MCF 10A (cell line): ENCODE measurements at regions of chr9 and their contacts with region 1.

Region 1: GRCh38 chr9:21709464-21710058 is 92.9 kb upstream of the MTAP start:
- DNase-seq: peak; percentile 59
- H3K4me3 Mint-ChIP-seq: no peak overlapping the region
- H3K27ac Mint-ChIP-seq: peak overlapping the region; percentile 35
- H3K4me1 Mint-ChIP-seq: peaks cover 6% of the 10 kb centered on the region
- H3K27me3 Mint-ChIP-seq: no peaks in the 10 kb centered on the region
- CTCF ChIP-seq: peak; percentile 29

Region 2: DNA sequence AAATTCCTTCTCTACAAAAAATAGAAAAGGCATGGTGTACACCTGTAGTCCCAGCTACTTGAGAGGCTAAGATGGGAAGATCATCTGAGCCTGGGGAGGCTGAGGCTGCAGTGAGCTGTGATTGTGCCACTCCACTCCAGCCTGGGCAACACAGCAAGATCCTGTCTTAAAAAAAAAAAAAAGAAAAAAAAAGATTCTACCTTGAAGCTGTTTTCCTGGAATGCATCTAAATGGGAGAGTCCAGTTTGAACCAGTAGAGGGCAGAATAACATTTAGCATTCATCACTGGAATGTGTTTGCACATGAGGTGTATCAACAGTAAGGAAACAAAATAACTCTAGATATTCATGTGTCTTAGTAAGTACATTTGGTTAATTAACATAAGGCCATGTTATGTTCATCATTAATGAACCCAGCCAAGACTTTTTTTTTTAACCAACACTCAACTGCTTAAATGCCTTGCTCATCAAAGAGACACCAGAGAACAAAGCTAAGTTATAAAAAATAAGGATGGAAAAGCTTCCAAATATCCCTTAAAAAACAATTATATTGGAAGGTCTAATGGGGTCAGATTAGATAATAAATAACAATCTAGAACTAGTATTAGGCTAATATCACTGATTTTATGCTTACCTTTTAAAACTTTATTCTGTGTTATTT is 243.6 kb before region 1 on chr9:
- CTCF ChIA-PET with region 1: interaction called, 26 read pairs
- POLR2A ChIA-PET with region 1: no interaction called
- intact Hi-C with region 1: loop called (anchors 10 kb)
- DNase-seq: peak; percentile 47
- H3K4me3 Mint-ChIP-seq: no peak overlapping the region
- H3K27ac Mint-ChIP-seq: no peak overlapping the region
- H3K4me1 Mint-ChIP-seq: no peaks in the 10 kb centered on the region
- H3K27me3 Mint-ChIP-seq: no peaks in the 10 kb centered on the region
- CTCF ChIP-seq: peak; percentile 38

Region 3: GRCh38 chr9:21473236-21473635 is 236.3 kb before region 1 on chr9:
- CTCF ChIA-PET with region 1: interaction called, 26 read pairs
- POLR2A ChIA-PET with region 1: no interaction called
- intact Hi-C with region 1: loop called (anchors 10 kb)
- DNase-seq: no peak
- H3K4me3 Mint-ChIP-seq: no peak overlapping the region
- H3K27ac Mint-ChIP-seq: no peak overlapping the region
- H3K4me1 Mint-ChIP-seq: no peaks in the 10 kb centered on the region
- H3K27me3 Mint-ChIP-seq: no peaks in the 10 kb centered on the region
- CTCF ChIP-seq: no peak

Region 4: DNA sequence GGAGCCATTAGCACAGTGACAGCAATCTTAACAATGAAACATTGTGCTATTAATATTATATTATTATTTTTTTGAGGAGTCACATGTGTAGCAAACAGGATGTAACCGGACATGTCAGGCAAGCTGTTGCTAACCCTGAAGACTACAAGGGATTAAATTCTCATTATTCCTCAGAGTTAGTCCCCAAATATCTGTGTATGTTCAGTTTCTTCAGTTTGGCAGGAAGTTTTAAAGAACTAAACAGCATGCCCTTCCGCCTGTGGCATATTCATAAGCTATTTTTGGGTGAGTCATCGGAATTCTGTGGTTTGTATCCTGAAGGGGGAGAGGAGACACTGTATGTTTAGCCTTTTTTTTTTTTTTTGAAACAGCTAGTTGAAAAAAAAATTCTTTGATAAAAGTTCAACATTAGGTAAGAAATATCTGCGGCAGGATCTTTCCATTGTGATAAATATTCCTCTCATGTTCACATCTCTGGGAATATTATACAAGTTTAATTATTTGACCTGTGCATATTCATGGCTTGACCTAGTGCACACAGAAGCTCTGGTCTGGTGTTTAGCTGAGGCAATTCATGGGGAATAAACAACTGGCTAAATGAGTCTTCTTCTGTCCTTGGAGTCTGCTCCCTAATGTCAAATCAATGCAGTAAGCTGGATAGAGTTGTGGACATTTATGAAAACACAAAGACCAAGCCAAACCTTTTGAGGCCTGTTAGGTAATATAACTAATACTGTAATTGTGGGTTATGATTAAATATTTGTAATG is 502.2 kb after region 1 on chr9:
- CTCF ChIA-PET with region 1: interaction called, 4 read pairs
- POLR2A ChIA-PET with region 1: no interaction called
- intact Hi-C with region 1: loop called (anchors 2 kb)
- DNase-seq: peak; percentile 79
- H3K4me3 Mint-ChIP-seq: no peak overlapping the region
- H3K27ac Mint-ChIP-seq: peak overlapping the region; percentile 79
- H3K4me1 Mint-ChIP-seq: peaks cover 23% of the 10 kb centered on the region
- H3K27me3 Mint-ChIP-seq: no peaks in the 10 kb centered on the region
- CTCF ChIP-seq: no peak

Region 5: GRCh38 chr9:22238809-22239684 is 529.5 kb after region 1 on chr9:
- CTCF ChIA-PET with region 1: interaction called, 21 read pairs
- POLR2A ChIA-PET with region 1: no interaction called
- intact Hi-C with region 1: loop called (anchors 1 kb)
- DNase-seq: peak; percentile 33
- H3K4me3 Mint-ChIP-seq: peak overlapping the region; percentile 50
- H3K27ac Mint-ChIP-seq: peak overlapping the region; percentile 86
- H3K4me1 Mint-ChIP-seq: peaks cover 37% of the 10 kb centered on the region
- H3K27me3 Mint-ChIP-seq: no peaks in the 10 kb centered on the region
- CTCF ChIP-seq: no peak